ENCODE measurements at regions of chr19 and their contacts with region 1.

Region 1: DNA sequence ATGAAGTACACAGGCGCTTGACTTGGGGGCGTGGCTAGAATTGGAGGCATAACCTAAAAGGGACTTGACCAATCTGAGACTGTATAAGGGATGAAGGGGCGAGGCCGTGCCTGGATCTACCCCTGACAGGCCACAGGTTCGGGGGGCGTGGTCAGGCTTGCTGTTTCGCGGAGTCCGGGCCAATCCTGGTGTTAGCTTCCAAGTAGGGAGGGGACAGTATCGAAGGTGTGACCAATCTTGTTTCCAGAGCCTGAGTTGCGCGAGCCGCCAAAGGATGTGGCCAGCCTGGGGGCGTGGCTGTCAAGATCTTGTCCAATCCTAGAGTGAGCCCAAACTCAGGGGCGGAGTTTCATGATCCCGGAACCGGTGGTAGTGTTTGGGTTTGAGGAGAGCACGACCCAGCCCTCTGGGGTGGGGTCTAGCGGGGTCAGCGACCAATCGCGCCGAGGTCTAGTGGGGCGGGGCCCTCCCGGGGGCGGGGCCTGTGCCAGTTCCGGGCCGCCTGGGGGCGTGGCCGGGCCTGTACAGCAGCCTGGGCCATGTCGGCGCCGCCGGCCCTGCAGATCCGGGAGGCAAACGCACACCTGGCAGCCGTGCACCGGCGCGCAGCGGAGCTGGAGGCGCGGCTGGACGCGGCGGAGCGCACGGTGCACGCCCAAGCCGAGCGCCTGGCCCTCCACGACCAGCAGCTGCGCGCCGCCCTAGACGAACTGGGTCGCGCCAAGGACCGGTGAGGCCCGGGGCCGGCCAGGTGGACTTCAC is at the start of gene VMAC:
- DNase-seq: peak; percentile 100
- ATAC-seq: peak; percentile 77
- H3K4me3 ChIP-seq: peak within 1 kb of the TSS; percentile 93 to 100
- H3K4me3 Mint-ChIP-seq: peak within 1 kb of the TSS; percentile 90
- H3K27ac ChIP-seq: peak within 1 kb of the TSS; percentile 90 to 92
- H3K27ac Mint-ChIP-seq: peak within 1 kb of the TSS; percentile 99
- H3K4me1 ChIP-seq: peaks cover 22% of the 10 kb centered on the region
- H3K4me1 Mint-ChIP-seq: peaks cover 31% of the 10 kb centered on the region
- H3K27me3 ChIP-seq: no peaks in the 10 kb centered on the region
- H3K27me3 Mint-ChIP-seq: no peaks in the 10 kb centered on the region
- CTCF ChIP-seq: no peak
- total RNA-seq, gene VMAC: 17.4 to 18.6 TPM

Region 2: DNA sequence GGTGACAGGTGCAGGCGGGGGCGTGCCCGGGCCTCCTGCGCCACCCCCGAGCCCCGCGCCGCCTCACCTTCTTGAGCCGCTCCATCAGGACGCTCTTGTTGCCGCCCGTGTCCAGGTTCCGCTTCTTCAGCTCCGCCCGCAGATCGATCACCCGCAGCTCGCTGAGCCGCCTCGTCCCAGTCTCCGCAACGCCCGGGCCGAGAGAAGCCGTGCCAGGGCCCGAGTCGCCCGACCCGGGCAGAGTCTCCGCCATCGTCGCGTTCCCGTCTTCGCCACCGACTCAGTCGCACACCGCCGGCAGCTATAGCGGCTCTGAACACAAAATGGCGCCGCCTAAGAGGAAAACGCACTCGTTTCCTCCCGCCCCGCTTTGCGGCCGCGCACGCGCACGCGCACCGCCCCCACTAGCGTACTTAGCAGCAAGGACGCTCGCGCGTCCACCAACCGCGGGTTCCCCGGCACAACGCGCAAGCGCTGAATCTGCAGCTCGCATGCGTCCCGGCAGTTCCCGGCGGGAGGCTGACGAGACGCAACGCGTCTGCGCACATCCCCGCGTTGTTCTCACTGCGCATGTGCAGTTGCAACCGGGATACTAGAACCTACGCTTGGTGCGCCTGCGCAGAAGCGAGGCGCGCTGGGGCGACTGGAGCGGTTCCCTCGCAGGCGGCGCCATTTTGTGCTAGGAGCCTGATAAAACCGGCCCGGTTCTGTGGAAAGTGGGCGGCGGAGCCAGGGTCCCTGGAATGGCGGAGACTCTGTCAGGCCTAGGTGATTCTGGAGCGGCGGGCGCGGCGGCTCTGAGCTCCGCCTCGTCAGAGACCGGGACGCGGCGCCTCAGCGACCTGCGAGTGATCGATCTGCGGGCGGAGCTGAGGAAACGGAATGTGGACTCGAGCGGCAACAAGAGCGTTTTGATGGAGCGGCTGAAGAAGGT is 281.8 kb before region 1 on chr19 and contains the starts of genes SAFB and SAFB2:
- CTCF ChIA-PET with region 1: interaction called, 3 read pairs
- POLR2A ChIA-PET with region 1: no interaction called
- intact Hi-C with region 1: loop called in 1 of 2 experiments (anchors 5 kb)
- DNase-seq: peak; percentile 99 to 100 (median 99)
- ATAC-seq: peak; percentile 87
- H3K4me3 ChIP-seq: peak within 1 kb of the TSS; percentile 91 to 93
- H3K4me3 Mint-ChIP-seq: peak within 1 kb of the TSS; percentile 100
- H3K27ac ChIP-seq: peak within 1 kb of the TSS; percentile 90 to 94
- H3K27ac Mint-ChIP-seq: peak within 1 kb of the TSS; percentile 99
- H3K4me1 ChIP-seq: peaks cover 77% of the 10 kb centered on the region
- H3K4me1 Mint-ChIP-seq: peaks cover 69% of the 10 kb centered on the region
- H3K27me3 ChIP-seq: no peaks in the 10 kb centered on the region
- H3K27me3 Mint-ChIP-seq: no peaks in the 10 kb centered on the region
- CTCF ChIP-seq: no peak
- total RNA-seq, gene SAFB: 190 to 191 TPM
- total RNA-seq, gene SAFB2: 293 to 302 TPM

Region 3: DNA sequence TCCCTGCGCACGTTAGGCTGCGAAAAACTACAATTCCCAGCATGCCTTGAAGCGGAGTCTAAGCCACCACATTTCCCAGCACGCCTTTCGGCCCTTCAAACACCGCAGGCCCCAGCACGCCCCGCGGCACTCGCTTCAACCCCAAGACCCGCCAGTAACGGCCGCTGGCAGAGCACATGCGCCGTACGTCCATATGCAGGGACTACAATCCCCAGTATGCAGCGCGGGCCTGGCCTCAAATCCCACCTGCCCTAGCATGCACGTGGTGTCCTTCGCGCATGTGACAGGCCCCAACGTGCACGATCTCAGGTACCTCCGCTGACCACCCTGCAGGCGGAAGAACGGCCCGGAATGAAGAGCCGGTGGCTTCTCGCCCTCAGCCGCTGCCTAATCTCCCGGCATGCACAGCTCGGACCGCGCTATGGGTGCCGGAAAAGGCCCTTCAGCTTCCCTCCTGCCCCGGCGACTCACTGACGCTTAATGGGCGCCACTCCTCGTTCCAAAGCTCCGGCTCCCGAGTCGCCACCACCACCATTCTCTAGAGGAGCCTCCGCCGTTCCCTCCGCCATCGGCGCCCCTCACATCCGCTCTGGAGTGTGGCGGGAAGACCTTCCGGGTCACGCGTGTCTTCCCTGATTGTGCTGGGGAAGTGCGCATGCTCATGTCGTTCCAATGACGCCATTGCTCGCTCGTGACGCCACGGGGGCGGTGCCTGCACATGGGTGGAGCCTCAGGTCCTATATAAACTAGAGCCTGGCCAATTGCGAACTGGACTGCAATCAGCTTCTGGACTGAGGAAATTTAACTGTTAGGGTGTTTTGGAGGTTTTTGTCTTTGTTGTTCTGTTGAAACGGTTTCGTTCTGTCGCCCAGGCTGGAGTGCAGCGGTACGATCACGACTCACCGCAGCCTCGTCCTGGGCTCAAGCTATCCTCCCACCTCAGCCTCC is 113.7 kb before region 1 on chr19 and contains the start of gene DUS3L:
- CTCF ChIA-PET with region 1: no interaction called
- POLR2A ChIA-PET with region 1: interaction called, 4 read pairs
- intact Hi-C with region 1: loop called (anchors 1 kb)
- DNase-seq: peak; percentile 91 to 98 (median 94)
- ATAC-seq: peak; percentile 95
- H3K4me3 ChIP-seq: peak within 1 kb of the TSS; percentile 86 to 91
- H3K4me3 Mint-ChIP-seq: peak within 1 kb of the TSS; percentile 97
- H3K27ac ChIP-seq: peak within 1 kb of the TSS; percentile 94 to 97
- H3K27ac Mint-ChIP-seq: peak within 1 kb of the TSS; percentile 99
- H3K4me1 ChIP-seq: peaks cover 7% of the 10 kb centered on the region
- H3K4me1 Mint-ChIP-seq: peaks cover 17% of the 10 kb centered on the region
- H3K27me3 ChIP-seq: no peaks in the 10 kb centered on the region
- H3K27me3 Mint-ChIP-seq: peaks cover 2% of the 10 kb centered on the region
- CTCF ChIP-seq: no peak
- total RNA-seq, gene DUS3L: 174 to 192 TPM

Region 4: DNA sequence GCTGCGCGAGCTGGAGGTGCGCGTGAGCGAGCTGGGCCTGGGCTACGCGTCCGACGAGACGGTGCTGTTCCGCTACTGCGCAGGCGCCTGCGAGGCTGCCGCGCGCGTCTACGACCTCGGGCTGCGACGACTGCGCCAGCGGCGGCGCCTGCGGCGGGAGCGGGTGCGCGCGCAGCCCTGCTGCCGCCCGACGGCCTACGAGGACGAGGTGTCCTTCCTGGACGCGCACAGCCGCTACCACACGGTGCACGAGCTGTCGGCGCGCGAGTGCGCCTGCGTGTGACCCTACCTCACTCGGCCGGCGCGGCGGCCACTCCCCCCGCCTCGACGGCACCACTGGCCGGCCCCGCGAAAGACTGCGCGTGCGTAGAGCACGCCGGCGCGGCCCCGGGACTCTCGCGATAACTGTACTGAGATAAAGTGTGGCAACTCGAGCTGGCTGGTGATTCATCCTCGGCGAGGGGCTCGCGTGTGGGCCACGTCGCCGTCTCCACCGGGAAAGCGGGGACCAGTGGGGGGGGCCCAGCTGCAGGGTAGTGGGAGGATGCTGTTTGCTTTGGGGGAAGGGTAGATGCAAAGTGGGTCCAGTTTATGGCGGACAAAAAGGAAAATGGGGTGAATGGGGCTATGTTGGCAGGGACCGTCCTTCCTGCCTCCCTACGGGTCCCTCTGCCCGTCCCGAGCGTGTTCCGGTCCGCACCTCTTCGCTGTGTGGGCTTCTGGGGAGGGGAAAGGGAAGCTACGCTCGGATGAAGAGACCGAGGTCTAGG is 76.5 kb before region 1 on chr19:
- CTCF ChIA-PET with region 1: no interaction called
- POLR2A ChIA-PET with region 1: interaction called, 37 read pairs
- intact Hi-C with region 1: loop called (anchors 1 kb)
- DNase-seq: peak; percentile 82 to 98 (median 90)
- ATAC-seq: peak; percentile 82
- H3K4me3 ChIP-seq: peak overlapping the region; percentile 56 to 70
- H3K4me3 Mint-ChIP-seq: peak overlapping the region; percentile 97
- H3K27ac ChIP-seq: peak overlapping the region; percentile 62 to 70
- H3K27ac Mint-ChIP-seq: peak overlapping the region; percentile 98
- H3K4me1 ChIP-seq: peaks cover 23% of the 10 kb centered on the region
- H3K4me1 Mint-ChIP-seq: peaks cover 15% of the 10 kb centered on the region
- H3K27me3 ChIP-seq: peaks cover 0 to 4% of the 10 kb centered on the region in 2 experiments
- H3K27me3 Mint-ChIP-seq: peaks cover 2% of the 10 kb centered on the region
- CTCF ChIP-seq: no peak

Region 5: GRCh38 chr19:5947435-5947834 is 42.9 kb after region 1 on chr19:
- CTCF ChIA-PET with region 1: no interaction called
- POLR2A ChIA-PET with region 1: interaction called, 11 read pairs
- intact Hi-C with region 1: no loop called
- DNase-seq: no peak
- ATAC-seq: no peak
- H3K4me3 ChIP-seq: no peak overlapping the region
- H3K4me3 Mint-ChIP-seq: no peak overlapping the region
- H3K27ac ChIP-seq: no peak overlapping the region
- H3K27ac Mint-ChIP-seq: peak overlapping the region; percentile 88
- H3K4me1 ChIP-seq: peaks cover 67% of the 10 kb centered on the region
- H3K4me1 Mint-ChIP-seq: peaks cover 79% of the 10 kb centered on the region
- H3K27me3 ChIP-seq: no peaks in the 10 kb centered on the region
- H3K27me3 Mint-ChIP-seq: no peaks in the 10 kb centered on the region
- CTCF ChIP-seq: no peak

Region 6: DNA sequence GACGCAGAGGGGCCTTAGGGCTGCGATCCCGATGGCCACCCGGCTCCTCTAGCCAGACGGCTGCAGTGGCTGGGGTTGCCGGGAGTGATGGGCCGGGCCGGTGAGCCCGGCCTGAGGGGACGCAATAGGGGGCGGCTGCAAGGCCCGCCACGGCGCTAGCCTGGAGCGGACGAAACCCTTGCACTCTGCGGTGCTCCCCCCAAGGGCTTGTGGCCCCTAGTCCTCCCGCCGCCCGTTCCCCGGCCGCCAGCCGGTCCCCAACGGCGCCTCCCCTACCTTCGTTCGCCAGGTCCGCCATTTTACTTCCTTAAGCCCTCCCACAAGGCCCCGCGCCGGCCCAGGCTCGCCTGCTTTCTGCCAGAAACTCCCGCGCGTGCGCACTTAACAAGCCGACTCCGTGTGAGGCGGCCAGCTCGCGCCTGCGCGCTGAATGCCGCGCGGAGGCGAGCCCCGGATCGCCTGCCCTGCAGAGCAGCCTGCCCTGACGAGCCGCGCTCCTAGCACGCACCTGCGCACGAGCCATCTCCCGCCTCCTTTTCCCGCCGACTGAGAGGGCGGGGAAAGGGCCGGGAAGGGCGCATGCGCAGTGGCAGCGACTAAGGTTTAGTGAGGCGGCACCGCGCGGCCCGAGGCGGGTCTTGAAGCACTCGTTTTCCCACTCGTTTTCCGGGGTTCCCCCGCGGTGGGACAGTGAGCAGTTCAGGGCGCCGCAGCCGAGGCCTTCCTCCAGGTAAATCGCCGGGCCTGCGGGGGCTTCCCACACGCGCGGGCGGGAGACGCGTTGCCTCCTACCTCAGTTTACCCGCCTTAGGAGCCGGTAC is 73.5 kb after region 1 on chr19 and contains the start of gene RANBP3:
- CTCF ChIA-PET with region 1: interaction called, 4 read pairs
- POLR2A ChIA-PET with region 1: interaction called, 14 read pairs
- intact Hi-C with region 1: loop called (anchors 1 kb)
- DNase-seq: peak; percentile 94 to 100 (median 99)
- ATAC-seq: peak; percentile 88
- H3K4me3 ChIP-seq: peak within 1 kb of the TSS; percentile 65 to 91
- H3K4me3 Mint-ChIP-seq: peak within 1 kb of the TSS; percentile 96
- H3K27ac ChIP-seq: peak within 1 kb of the TSS; percentile 83 to 85
- H3K27ac Mint-ChIP-seq: peak within 1 kb of the TSS; percentile 95
- H3K4me1 ChIP-seq: peaks cover 50% of the 10 kb centered on the region
- H3K4me1 Mint-ChIP-seq: peaks cover 56% of the 10 kb centered on the region
- H3K27me3 ChIP-seq: no peaks in the 10 kb centered on the region
- H3K27me3 Mint-ChIP-seq: no peaks in the 10 kb centered on the region
- CTCF ChIP-seq: no peak
- total RNA-seq, gene RANBP3: 109 to 118 TPM